Endothelial cell of umbilical vein (primary cell): ENCODE measurements at regions of chr22 and their contacts with region 1.

Region 1: GRCh38 chr22:38569972-38570778 is at the start of gene DMC1:
- DNase-seq: peak; percentile 69
- H3K4me3 ChIP-seq: peak within 1 kb of the TSS; percentile 19 to 75 (median 60)
- H3K27ac ChIP-seq: no peak within 1 kb of the TSS
- H3K4me1 ChIP-seq: peaks cover 7% of the 10 kb centered on the region
- H3K27me3 ChIP-seq: peaks cover 0 to 2% of the 10 kb centered on the region in 2 experiments
- CTCF ChIP-seq: no peak
- POLR2A ChIP-seq: no peak
- total RNA-seq, gene DMC1: 0.91 and 1.1 TPM in 2 replicates

Region 2: DNA sequence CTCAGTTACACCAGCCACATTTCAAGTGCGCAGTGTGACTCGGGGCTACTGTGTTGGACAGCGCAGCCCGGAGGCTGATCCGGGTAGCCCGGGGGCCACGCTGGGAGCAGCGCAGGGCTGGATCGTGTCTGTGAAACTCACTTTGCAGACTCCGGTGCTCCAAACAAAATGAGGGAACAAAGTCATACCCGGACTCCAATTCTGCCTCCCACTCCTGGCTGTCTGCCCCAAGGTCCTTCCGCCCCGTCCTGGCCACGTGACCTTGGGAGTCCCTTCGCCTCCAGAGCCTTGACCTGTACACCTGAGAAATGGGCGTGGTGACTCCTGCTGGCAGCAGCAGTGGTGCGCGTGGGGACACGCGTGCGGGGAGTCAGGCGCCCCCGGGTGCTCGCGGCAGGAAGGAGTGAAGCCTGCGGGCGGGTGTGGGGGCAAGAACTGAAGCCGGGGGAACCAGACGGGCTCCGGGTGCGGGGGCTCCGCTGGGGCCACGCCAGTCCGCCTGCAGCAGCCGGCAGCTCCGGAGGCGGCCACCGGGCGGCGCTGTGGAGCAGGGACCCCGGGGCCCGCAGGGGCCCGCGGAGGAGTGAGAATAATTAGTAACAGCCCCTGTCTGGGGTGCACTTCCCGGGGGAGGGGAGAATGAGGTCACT is 157.6 kb before region 1 on chr22:
- CTCF ChIA-PET with region 1: no interaction called
- POLR2A ChIA-PET with region 1: no interaction called
- dilution Hi-C with region 1: no loop called
- intact Hi-C with region 1: loop called (anchors 1 kb)
- DNase-seq: no peak
- H3K4me3 ChIP-seq: no peak overlapping the region
- H3K27ac ChIP-seq: no peak overlapping the region
- H3K4me1 ChIP-seq: no peaks in the 10 kb centered on the region
- H3K27me3 ChIP-seq: no peaks in the 10 kb centered on the region
- CTCF ChIP-seq: peak; percentile 74 to 87
- POLR2A ChIP-seq: no peak

Region 3: GRCh38 chr22:38474003-38474607 is 96.1 kb before region 1 on chr22:
- CTCF ChIA-PET with region 1: no interaction called
- POLR2A ChIA-PET with region 1: no interaction called
- dilution Hi-C with region 1: no loop called
- intact Hi-C with region 1: no loop called
- DNase-seq: no peak
- H3K4me3 ChIP-seq: no peak overlapping the region
- H3K27ac ChIP-seq: no peak overlapping the region
- H3K4me1 ChIP-seq: peaks cover under 1% of the 10 kb centered on the region
- H3K27me3 ChIP-seq: no peaks in the 10 kb centered on the region
- CTCF ChIP-seq: no peak
- POLR2A ChIP-seq: no peak